ENCODE measurements at regions of chr1 and their contacts with region 1.

Region 1: GRCh38 chr1:167263819-167264464 is 43.3 kb downstream of the POU2F1 start:
- DNase-seq: no peak
- ATAC-seq: peak; percentile 67
- H3K4me3 Mint-ChIP-seq: no peak overlapping the region
- H3K27ac Mint-ChIP-seq: no peak overlapping the region
- H3K4me1 Mint-ChIP-seq: peaks cover 22% of the 10 kb centered on the region
- H3K27me3 Mint-ChIP-seq: no peaks in the 10 kb centered on the region
- CTCF ChIP-seq: no peak

Region 2: DNA sequence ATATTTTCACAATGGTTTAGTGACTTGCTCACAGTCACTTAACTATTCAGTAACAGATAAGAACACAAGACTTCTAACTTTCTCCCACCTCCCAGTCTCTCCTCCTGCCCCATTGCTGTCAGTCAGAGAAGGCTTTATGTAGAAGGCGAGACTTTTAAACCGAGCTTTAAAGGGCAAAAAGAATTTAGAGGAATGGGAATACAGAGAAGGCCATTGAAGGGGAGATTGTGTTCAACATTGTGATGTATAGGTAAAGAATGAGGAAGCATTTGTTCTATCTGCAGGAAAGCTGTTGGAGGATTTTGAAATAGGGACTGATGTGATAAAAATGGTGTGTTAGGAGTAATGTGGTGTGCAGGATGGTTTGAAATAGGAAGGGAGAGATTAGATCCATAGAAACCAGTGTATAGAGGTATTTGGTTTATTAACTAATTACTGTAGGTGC is 36.0 kb before region 1 on chr1:
- CTCF ChIA-PET with region 1: no interaction called
- POLR2A ChIA-PET with region 1: no interaction called
- intact Hi-C with region 1: no loop called
- DNase-seq: no peak
- ATAC-seq: no peak
- H3K4me3 Mint-ChIP-seq: no peak overlapping the region
- H3K27ac Mint-ChIP-seq: no peak overlapping the region
- H3K4me1 Mint-ChIP-seq: peaks cover 57% of the 10 kb centered on the region
- H3K27me3 Mint-ChIP-seq: no peaks in the 10 kb centered on the region
- CTCF ChIP-seq: no peak

Region 3: GRCh38 chr1:167249702-167250101 is 14.2 kb before region 1 on chr1:
- CTCF ChIA-PET with region 1: interaction called, 13 read pairs
- POLR2A ChIA-PET with region 1: interaction called, 3 read pairs
- intact Hi-C with region 1: no loop called
- DNase-seq: peak; percentile 30
- ATAC-seq: peak; percentile 89
- H3K4me3 Mint-ChIP-seq: no peak overlapping the region
- H3K27ac Mint-ChIP-seq: no peak overlapping the region
- H3K4me1 Mint-ChIP-seq: peaks cover 43% of the 10 kb centered on the region
- H3K27me3 Mint-ChIP-seq: no peaks in the 10 kb centered on the region
- CTCF ChIP-seq: no peak

Region 4: GRCh38 chr1:167401260-167401873 is 137.4 kb after region 1 on chr1:
- CTCF ChIA-PET with region 1: interaction called, 18 read pairs
- POLR2A ChIA-PET with region 1: no interaction called
- intact Hi-C with region 1: no loop called
- DNase-seq: peak; percentile 69
- ATAC-seq: peak; percentile 77
- H3K4me3 Mint-ChIP-seq: no peak overlapping the region
- H3K27ac Mint-ChIP-seq: no peak overlapping the region
- H3K4me1 Mint-ChIP-seq: peaks cover 2% of the 10 kb centered on the region
- H3K27me3 Mint-ChIP-seq: no peaks in the 10 kb centered on the region
- CTCF ChIP-seq: peak; percentile 68

Region 5: DNA sequence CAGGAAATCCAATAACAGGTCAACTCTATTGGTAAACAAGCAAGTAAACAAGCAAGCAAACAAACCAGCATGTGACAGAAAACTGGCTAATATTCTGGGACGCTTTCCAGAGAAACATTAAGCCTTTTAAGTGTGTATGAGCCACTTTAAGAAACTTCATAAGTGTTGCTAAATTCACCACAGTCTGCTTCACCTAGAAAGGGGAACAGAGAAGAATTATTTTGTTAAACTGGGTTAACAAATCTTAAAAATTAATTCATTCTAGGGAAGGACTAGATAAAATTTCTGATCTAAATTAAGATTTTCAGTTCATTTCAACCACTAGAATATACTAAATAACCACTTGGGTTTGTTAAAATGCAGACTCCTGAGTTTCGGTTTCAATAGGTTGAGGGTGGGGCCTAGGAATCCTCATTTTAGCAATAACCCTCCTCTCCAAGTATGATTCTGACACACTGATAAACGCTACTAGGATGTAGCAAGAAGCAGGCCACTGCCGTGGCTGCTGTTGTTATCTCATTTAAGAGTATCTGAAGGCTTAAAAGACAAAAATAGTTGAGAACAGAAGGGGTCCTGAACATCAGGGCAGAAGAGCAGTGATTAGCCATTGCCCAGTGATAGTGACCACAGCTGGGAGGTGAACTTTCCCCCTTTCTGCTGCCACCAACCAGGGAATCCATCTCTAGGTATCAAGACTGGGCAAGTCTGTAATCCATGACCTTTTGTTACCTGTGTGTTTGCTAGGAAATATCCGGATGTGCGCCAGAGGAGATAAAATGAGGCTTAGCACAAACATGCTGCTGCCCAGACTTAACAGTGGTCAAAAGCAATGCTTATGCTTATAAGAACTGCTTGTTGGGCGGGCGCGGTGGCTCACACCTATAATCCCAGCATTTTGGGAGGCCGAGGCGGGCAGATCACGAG is 278.4 kb after region 1 on chr1:
- CTCF ChIA-PET with region 1: interaction called, 20 read pairs
- POLR2A ChIA-PET with region 1: no interaction called
- intact Hi-C with region 1: no loop called
- DNase-seq: no peak
- ATAC-seq: peak; percentile 32
- H3K4me3 Mint-ChIP-seq: no peak overlapping the region
- H3K27ac Mint-ChIP-seq: peak overlapping the region; percentile 2
- H3K4me1 Mint-ChIP-seq: peaks cover 28% of the 10 kb centered on the region
- H3K27me3 Mint-ChIP-seq: no peaks in the 10 kb centered on the region
- CTCF ChIP-seq: no peak

Measured in activated CD8-positive, alpha-beta T cell treated with anti-CD3 and anti-CD28 coated beads for 36 hours (primary cell).